Activated naive CD4-positive, alpha-beta T cell treated with anti-CD3 and anti-CD28 coated beads for 36 hours (primary cell): ENCODE measurements at regions of chr5 and their contacts with region 1.

Region 1: GRCh38 chr5:87267574-87268125 is at the start of gene RASA1:
- DNase-seq: peak; percentile 90
- H3K4me3 Mint-ChIP-seq: peak within 1 kb of the TSS; percentile 100
- H3K27ac Mint-ChIP-seq: peak within 1 kb of the TSS; percentile 96
- H3K4me1 Mint-ChIP-seq: peaks cover 30% of the 10 kb centered on the region
- H3K27me3 Mint-ChIP-seq: no peaks in the 10 kb centered on the region
- total RNA-seq, gene RASA1: 15.4 to 16.2 TPM

Region 2: DNA sequence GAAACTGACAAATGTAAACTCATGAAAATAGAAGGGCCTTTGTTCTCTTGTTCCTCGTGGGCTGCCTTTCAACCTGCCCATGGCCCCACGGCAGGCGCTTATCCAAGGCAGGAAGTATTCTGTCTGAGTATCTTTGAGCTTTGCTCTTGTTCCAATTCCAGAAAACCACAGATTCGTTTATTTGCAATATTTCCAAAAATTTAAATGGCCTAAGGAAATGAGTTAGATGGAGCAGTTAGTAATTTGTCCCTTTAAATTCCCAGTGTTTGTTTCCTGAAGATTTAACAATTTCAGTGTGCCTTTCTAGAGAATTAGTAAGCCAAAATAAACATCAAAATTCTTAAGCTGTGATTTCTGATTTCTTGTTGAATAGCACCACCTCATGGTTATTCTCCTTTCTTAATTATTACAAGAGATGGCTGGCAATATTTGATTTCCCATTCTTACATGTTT is 299.3 kb before region 1 on chr5:
- CTCF ChIA-PET with region 1: no interaction called
- intact Hi-C with region 1: loop called (anchors 5 kb)
- DNase-seq: no peak
- H3K4me3 Mint-ChIP-seq: no peak overlapping the region
- H3K27ac Mint-ChIP-seq: no peak overlapping the region
- H3K4me1 Mint-ChIP-seq: peaks cover 3% of the 10 kb centered on the region
- H3K27me3 Mint-ChIP-seq: peaks cover 6% of the 10 kb centered on the region

Region 3: GRCh38 chr5:87195104-87195591 is 72.5 kb before region 1 on chr5:
- CTCF ChIA-PET with region 1: no interaction called
- intact Hi-C with region 1: loop called (anchors 1 kb)
- DNase-seq: peak; percentile 55
- H3K4me3 Mint-ChIP-seq: no peak overlapping the region
- H3K27ac Mint-ChIP-seq: no peak overlapping the region
- H3K4me1 Mint-ChIP-seq: peaks cover 14% of the 10 kb centered on the region
- H3K27me3 Mint-ChIP-seq: no peaks in the 10 kb centered on the region

Region 4: GRCh38 chr5:87340716-87341115 is 73.1 kb after region 1 on chr5:
- CTCF ChIA-PET with region 1: no interaction called
- intact Hi-C with region 1: loop called (anchors 1 kb)
- DNase-seq: no peak
- H3K4me3 Mint-ChIP-seq: peak overlapping the region; percentile 33
- H3K27ac Mint-ChIP-seq: peak overlapping the region; percentile 77
- H3K4me1 Mint-ChIP-seq: peaks cover 20% of the 10 kb centered on the region
- H3K27me3 Mint-ChIP-seq: no peaks in the 10 kb centered on the region

Region 5: DNA sequence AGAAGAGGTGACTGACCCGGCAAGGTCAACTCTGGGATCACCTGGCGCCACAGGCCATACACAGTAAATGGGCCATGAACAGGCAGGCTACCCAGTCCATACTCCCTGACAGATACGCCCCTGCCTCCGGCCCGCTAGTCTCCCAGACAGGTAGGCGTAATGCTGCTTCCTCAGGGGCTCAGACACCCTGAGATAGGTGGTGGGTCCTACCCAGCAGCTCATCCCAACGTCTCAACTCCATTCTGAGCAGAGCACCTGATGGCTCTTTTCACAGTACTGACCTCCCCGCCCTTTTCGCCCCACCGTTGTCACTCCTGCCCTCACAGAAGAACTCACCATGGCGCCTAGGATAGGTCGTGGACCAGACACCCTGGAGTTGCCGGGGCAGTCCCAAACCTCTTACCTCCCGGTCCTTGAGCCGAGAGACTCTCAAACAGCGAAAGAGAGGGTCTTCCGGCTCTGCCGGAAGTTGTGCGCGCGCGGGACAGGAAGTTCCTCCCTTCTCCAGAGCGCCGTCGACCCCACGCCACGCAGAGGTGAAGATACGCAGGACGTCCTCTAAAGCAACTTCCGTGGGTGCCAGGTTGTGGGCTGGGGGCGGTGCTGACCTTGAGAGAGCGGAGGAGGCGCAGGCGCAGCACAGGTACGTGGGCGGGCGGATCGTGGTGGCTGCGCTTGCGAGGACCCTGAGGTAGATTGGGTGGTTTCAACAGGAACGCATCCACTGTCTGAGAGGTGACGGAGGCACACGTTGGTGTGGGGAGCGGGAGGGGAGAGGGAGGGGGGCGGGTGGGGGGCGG is 1000.9 kb after region 1 on chr5 and contains the start of gene TMEM161B:
- CTCF ChIA-PET with region 1: no interaction called
- intact Hi-C with region 1: loop called (anchors 5 kb)
- DNase-seq: peak; percentile 94
- H3K4me3 Mint-ChIP-seq: peak within 1 kb of the TSS; percentile 93
- H3K27ac Mint-ChIP-seq: peak within 1 kb of the TSS; percentile 96
- H3K4me1 Mint-ChIP-seq: peaks cover 42% of the 10 kb centered on the region
- H3K27me3 Mint-ChIP-seq: no peaks in the 10 kb centered on the region
- total RNA-seq, gene TMEM161B: 18.0 to 18.1 TPM